MCF 10A (cell line): ENCODE measurements at regions of chr6 and their contacts with region 1.

Region 1: DNA sequence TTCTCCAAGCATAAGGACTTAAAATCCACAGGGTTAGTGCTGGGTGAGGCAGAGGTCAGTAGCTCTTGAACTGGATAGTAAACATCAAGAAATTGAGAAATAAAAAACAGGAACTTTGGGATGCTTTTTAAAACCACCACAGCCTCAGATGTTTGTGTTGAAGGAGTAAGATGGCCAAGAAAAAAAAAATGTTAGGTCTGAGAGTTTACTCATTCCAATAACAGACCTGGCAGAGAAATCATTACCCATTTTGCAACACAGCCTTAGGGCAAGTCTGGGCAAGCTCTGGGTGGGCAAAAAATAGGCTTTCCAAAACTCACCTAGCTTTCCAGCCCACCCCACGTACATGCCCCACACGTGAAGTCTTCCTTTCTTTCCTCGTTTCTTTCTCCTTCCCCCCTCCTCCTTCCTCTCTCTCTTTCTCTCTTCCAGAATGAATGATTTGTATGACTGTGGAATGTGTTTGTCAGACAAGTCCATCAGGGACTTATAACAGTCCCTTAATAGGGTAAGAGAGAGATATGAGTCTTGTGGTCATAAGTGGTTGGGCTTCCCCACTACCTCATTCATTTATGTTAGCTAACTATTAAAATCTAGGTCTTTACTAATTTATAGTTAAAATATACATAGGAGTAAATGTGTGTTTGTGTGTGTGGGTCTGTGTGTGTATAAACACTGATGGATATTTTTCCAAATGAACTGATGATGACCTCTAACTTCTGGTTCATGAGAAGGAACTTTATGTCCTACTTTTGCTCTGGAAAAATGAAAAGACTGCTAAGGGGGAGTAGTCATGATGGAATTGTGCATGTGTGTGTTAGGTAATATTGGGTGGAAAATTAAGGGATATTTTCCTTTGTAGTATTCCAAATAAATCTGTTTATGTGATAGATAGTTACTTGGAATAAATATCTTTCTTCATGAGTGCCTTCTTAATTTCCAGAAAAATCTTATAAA is 18.0 kb upstream of the DSE start:
- DNase-seq: peak; percentile 48
- H3K4me3 Mint-ChIP-seq: peak overlapping the region; percentile 11
- H3K27ac Mint-ChIP-seq: peak overlapping the region; percentile 90
- H3K4me1 Mint-ChIP-seq: peaks cover 15% of the 10 kb centered on the region
- H3K27me3 Mint-ChIP-seq: no peaks in the 10 kb centered on the region
- CTCF ChIP-seq: no peak

Region 2: DNA sequence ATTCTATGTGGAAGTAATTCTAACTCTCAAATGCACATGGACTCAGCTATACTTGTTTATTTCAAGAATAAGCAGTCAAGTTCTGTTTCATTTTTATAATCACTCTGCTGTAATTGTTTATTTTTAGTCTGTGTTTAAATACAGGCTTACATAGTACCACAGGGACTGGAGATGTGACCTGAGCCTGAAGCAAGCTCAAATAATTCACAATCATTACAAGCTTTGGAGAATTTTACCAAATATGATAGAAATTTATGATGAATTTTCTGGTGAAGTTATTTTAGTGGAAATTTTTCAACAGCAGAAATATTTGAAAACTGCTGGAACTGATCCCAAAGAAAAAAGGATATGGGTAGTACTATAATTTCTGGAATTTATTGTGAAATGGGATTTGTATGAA is 23.6 kb before region 1 on chr6:
- CTCF ChIA-PET with region 1: no interaction called
- POLR2A ChIA-PET with region 1: interaction called, 12 read pairs
- intact Hi-C with region 1: no loop called
- DNase-seq: no peak
- H3K4me3 Mint-ChIP-seq: no peak overlapping the region
- H3K27ac Mint-ChIP-seq: no peak overlapping the region
- H3K4me1 Mint-ChIP-seq: peaks cover 6% of the 10 kb centered on the region
- H3K27me3 Mint-ChIP-seq: no peaks in the 10 kb centered on the region
- CTCF ChIP-seq: no peak

Region 3: GRCh38 chr6:116363759-116364158 is 11.0 kb after region 1 on chr6:
- CTCF ChIA-PET with region 1: interaction called, 5 read pairs
- POLR2A ChIA-PET with region 1: interaction called, 13 read pairs
- intact Hi-C with region 1: no loop called
- DNase-seq: peak; percentile 52
- H3K4me3 Mint-ChIP-seq: peak overlapping the region; percentile 57
- H3K27ac Mint-ChIP-seq: peak overlapping the region; percentile 54
- H3K4me1 Mint-ChIP-seq: peaks cover 13% of the 10 kb centered on the region
- H3K27me3 Mint-ChIP-seq: no peaks in the 10 kb centered on the region
- CTCF ChIP-seq: no peak

Region 4: DNA sequence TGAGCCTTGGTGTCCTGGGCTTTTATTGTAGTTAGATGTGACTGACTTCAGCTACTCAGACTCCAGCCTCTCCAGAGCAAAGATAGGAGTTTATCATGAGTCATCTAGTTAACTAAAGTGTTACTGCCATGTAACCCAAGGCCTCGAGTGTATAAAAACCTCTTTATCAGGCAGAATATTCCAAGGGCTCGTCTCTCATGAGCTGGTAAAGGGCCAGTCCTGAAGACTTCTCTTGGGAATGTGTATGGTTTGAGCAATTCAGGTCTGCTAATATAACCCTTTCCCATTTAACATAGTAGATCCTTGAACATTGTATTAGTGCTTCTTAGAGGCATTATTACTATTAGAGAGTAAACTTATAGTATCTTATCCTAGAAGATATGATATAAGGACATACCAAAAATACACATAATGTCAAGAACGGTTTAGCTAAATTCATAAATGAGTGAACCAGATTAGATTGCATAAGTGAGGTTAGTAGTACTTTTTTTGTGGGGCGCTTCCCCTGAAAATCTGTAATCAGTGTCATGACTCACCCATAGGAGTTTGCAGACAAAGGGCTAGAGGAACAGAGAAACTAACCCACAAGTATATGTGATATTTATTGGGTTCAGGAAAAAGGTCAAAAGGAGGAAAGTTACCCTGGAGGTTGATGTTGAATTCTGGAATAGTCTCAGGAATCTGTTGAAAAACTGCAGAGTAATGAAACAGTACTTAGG is 33.9 kb after region 1 on chr6:
- CTCF ChIA-PET with region 1: no interaction called
- POLR2A ChIA-PET with region 1: no interaction called
- intact Hi-C with region 1: no loop called
- DNase-seq: peak; percentile 82
- H3K4me3 Mint-ChIP-seq: peak overlapping the region; percentile 50
- H3K27ac Mint-ChIP-seq: peak overlapping the region; percentile 89
- H3K4me1 Mint-ChIP-seq: peaks cover 58% of the 10 kb centered on the region
- H3K27me3 Mint-ChIP-seq: no peaks in the 10 kb centered on the region
- CTCF ChIP-seq: no peak